ENCODE measurements at regions of chr10 and their contacts with region 1.

Region 1: DNA sequence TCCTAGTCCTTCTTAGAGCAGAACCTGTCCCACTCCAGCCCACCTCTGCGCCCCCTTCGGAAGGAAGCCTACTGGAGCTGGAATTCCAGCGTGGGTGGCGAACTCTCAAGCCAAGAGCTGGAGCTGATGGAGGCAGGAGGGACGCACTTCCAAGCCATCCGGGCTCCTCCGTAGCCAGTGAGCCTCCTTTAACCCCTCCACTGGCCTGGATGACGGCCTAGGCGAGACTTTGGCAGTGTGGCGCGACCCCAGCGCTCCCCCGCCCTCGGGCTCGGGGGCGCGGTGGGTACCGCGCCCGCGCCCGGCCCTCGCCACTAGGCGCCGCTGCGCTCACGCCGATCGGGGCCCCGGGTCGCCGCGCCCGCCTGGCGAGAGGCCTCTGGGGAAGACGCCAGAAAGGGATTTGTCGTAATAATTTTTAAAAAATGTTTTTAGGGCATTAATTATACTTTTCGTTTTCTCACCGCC is 5.1 kb upstream of the EMX2 start:
- ATAC-seq: peak; percentile 16 to 84 (median 64)
- H3K4me3 ChIP-seq: no peak overlapping the region
- H3K27ac ChIP-seq: no peak overlapping the region
- H3K4me1 ChIP-seq: peaks cover 6 to 10% of the 10 kb centered on the region in 2 donors

Region 2: GRCh38 chr10:117684672-117685271 is 147.3 kb after region 1 on chr10:
- in situ Hi-C with region 1: loop called in 1 of 9 experiments (anchors 10 kb)
- ATAC-seq: peak in 4 of 8 experiments; percentile 12 to 97 (median 96)
- H3K4me3 ChIP-seq: no peak overlapping the region
- H3K27ac ChIP-seq: no peak overlapping the region
- H3K4me1 ChIP-seq: peaks cover under 1 to 3% of the 10 kb centered on the region in 2 donors

Region 3: GRCh38 chr10:118259288-118259906 is 721.9 kb after region 1 on chr10:
- in situ Hi-C with region 1: loop called in 1 of 9 experiments (anchors 10 kb)
- ATAC-seq: peak in 4 of 8 experiments; percentile 36 to 64 (median 54)
- H3K4me3 ChIP-seq: no peak overlapping the region
- H3K27ac ChIP-seq: no peak overlapping the region
- H3K4me1 ChIP-seq: peaks cover 3 to 10% of the 10 kb centered on the region in 2 donors

Region 4: GRCh38 chr10:118459726-118460193 is 922.3 kb after region 1 on chr10:
- in situ Hi-C with region 1: loop called in 1 of 9 experiments (anchors 25 kb)
- ATAC-seq: peak; percentile 76 to 96 (median 88)
- H3K4me3 ChIP-seq: no peak overlapping the region
- H3K27ac ChIP-seq: no peak overlapping the region
- H3K4me1 ChIP-seq: no peaks in the 10 kb centered on the region